ENCODE measurements at regions of chr4 and their contacts with region 1.

Region 1: GRCh38 chr4:186037692-186038658 is 31.0 kb upstream of the TLR3 start:
- DNase-seq: peak; percentile 50
- ATAC-seq: no peak
- H3K4me3 Mint-ChIP-seq: no peak overlapping the region
- H3K27ac Mint-ChIP-seq: no peak overlapping the region
- H3K4me1 Mint-ChIP-seq: no peaks in the 10 kb centered on the region
- H3K27me3 Mint-ChIP-seq: peaks cover 5% of the 10 kb centered on the region

Region 2: GRCh38 chr4:185640811-185641675 is 396.9 kb before region 1 on chr4:
- CTCF ChIA-PET with region 1: interaction called, 19 read pairs
- POLR2A ChIA-PET with region 1: no interaction called
- DNase-seq: no peak
- ATAC-seq: no peak
- H3K4me3 Mint-ChIP-seq: no peak overlapping the region
- H3K27ac Mint-ChIP-seq: no peak overlapping the region
- H3K4me1 Mint-ChIP-seq: no peaks in the 10 kb centered on the region
- H3K27me3 Mint-ChIP-seq: peaks cover 27% of the 10 kb centered on the region

Region 3: GRCh38 chr4:186021461-186022167 is 16.4 kb before region 1 on chr4:
- CTCF ChIA-PET with region 1: interaction called, 12 read pairs
- POLR2A ChIA-PET with region 1: no interaction called
- DNase-seq: no peak
- ATAC-seq: no peak
- H3K4me3 Mint-ChIP-seq: no peak overlapping the region
- H3K27ac Mint-ChIP-seq: no peak overlapping the region
- H3K4me1 Mint-ChIP-seq: no peaks in the 10 kb centered on the region
- H3K27me3 Mint-ChIP-seq: peaks cover 4% of the 10 kb centered on the region

Region 4: DNA sequence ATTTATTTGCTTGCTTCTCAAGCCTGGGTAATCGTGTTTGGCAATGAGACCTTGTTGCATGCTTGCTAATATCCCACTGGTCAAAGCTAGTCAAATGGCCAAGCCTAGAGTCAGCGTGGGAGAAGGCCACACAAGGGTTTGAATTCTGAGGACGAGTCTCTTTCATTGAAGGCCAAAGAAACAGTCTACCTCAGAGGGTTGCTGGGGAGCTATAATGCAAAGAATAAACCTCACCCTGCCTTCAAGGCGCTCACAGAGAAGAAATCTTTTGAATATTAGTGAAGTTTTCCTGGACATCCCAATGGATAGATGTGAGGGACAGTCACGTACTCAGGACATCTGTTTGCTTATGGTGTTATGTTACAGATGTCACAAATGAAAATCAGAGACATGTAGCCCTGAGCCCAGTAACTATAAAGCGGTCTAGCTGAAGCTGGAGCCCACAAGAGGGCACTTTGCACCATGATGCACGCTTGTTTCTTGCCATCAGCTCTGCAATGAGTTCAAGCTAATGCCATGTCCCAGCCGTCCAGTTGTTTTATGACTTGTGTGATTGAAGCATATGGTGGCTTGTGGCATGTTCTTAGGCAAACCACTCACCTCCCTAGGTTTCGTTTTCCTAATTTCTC is 29.9 kb after region 1 on chr4:
- CTCF ChIA-PET with region 1: interaction called, 10 read pairs
- POLR2A ChIA-PET with region 1: no interaction called
- DNase-seq: peak; percentile 62
- ATAC-seq: peak; percentile 70
- H3K4me3 Mint-ChIP-seq: peak overlapping the region; percentile 68
- H3K27ac Mint-ChIP-seq: no peak overlapping the region
- H3K4me1 Mint-ChIP-seq: peaks cover 19% of the 10 kb centered on the region
- H3K27me3 Mint-ChIP-seq: peaks cover 4% of the 10 kb centered on the region

Region 5: GRCh38 chr4:186416451-186417060 is 378.6 kb after region 1 on chr4:
- CTCF ChIA-PET with region 1: no interaction called
- POLR2A ChIA-PET with region 1: no interaction called
- DNase-seq: no peak
- ATAC-seq: no peak
- H3K4me3 Mint-ChIP-seq: no peak overlapping the region
- H3K27ac Mint-ChIP-seq: no peak overlapping the region
- H3K4me1 Mint-ChIP-seq: no peaks in the 10 kb centered on the region
- H3K27me3 Mint-ChIP-seq: no peaks in the 10 kb centered on the region